Gastrocnemius medialis (tissue), 4 donors: ENCODE measurements at regions of chr21 and their contacts with region 1.

Region 1: DNA sequence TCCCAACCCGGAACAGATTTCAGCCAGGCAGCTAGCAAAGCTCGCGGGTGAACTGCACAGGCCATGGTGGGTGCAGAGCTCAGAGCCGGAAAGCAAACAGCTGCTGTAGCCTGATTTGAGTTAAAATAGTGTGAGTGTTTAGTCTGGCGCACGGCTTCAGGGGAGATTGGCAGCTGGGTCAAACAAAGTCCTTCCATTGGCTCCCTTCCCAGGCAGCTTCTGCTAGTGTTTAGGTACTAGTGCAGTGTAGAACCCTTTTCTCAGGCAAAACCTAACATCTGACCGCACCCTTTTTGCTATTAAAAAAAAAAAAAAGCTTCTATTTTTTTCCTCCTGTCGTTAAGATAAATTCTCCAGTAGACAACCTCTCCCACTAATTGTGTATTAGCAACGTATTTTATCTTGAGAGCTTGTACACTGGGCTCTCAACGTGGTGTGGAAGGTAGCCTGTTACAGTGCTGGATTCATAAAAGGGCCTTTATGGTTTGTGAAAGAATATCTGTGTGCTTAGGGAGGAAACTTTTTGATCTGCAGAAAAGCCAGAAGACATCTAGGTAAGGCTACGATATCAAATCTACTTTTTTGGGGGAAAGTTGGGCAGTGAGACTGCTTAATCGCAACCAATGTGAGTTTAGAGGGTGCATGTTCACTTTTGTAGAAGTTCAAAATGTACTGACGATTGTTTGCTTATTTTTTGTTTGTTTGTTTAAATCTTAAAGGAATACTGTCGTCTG is 689.6 kb downstream of the USP25 start:
- DNase-seq: peak; percentile 52 to 59
- ATAC-seq: peak; percentile 64 to 66
- H3K4me3 ChIP-seq: peak overlapping the region; percentile 51 to 60 (median 56)
- H3K27ac ChIP-seq: peak overlapping the region; percentile 86 to 91 (median 90)
- H3K4me1 ChIP-seq: peaks cover 4 to 15% of the 10 kb centered on the region in 2 donors
- H3K27me3 ChIP-seq: no peaks in the 10 kb centered on the region
- CTCF ChIP-seq: no peak
- POLR2A ChIP-seq: no peak

Region 2: DNA sequence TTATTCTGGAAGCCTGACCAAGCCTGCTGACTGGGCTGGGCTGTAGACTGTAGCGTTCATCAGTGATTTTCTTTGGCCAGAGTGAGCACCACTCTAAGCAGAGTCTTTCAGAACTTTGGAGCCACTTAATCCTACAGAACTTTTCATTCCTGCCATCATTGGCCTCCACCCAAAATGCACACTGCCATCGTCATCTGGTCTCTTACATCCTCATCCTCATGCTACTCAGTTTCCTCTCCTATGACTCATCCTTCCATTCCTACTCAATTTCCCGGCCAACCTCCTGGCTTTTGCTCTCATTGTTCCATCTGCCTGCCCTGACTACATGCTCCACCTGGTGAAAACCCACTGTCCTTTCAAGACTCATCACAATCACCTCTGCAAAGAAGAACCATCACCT is 923.4 kb before region 1 on chr21:
- in situ Hi-C with region 1: no loop called
- intact Hi-C with region 1: no loop called
- DNase-seq: no peak
- ATAC-seq: no peak
- H3K4me3 ChIP-seq: no peak overlapping the region
- H3K27ac ChIP-seq: no peak overlapping the region
- H3K4me1 ChIP-seq: no peaks in the 10 kb centered on the region
- H3K27me3 ChIP-seq: no peaks in the 10 kb centered on the region
- CTCF ChIP-seq: no peak
- POLR2A ChIP-seq: no peak

Region 3: GRCh38 chr21:15729674-15730483 is 689.5 kb before region 1 on chr21 and contains the start of gene USP25:
- in situ Hi-C with region 1: no loop called
- intact Hi-C with region 1: loop called (anchors 5 kb)
- DNase-seq: peak; percentile 91 to 93
- ATAC-seq: peak; percentile 86
- H3K4me3 ChIP-seq: peak within 1 kb of the TSS; percentile 60 to 83 (median 78)
- H3K27ac ChIP-seq: peak within 1 kb of the TSS; percentile 92 to 95 (median 94)
- H3K4me1 ChIP-seq: peaks cover 13 to 22% of the 10 kb centered on the region in 2 donors
- H3K27me3 ChIP-seq: no peaks in the 10 kb centered on the region
- CTCF ChIP-seq: peak in 3 of 5 experiments; percentile 16 to 42 (median 28)
- POLR2A ChIP-seq: peak; percentile 87 to 95
- total RNA-seq, gene USP25: 99.4 to 130 (median 107) TPM

Region 4: DNA sequence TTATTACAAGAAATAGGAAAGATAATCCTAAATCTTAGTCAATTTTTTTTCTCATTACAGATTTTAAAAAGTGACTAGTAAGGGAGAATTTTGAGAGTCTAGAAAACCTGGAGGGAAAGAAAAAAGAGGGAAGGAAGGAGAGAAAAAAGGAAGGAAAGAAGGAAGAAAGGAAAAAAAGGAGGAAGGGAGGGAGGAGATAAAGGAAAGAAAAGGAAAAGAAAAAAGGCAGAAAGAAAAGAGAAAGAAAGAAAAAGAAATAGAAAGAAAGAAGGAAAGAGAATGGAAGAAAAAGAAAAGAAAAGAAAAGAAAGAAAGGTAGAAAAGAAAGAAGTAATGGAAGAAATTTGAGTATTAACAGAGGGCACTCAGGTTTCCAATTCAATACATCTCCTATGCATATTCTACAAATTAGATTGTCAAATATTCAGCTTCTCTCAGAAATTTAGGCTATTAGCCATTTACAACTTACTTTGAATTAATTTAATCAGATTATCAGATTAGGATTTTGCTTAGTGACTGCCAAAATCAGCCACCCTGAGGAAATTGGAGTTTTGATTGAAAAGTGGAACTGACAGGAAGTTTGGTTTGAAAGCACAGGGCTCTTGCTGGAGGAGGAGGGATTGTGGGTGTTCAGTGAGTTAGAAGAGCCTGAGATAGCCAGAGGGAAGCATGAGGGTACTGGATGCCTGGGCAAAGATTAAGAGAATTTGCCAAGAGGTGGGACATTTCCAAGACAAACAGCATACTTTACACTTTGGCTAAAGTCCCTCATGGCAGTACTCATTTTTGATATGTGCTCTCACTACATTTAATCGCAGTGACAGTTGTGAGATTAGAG is 11.7 kb before region 1 on chr21:
- in situ Hi-C with region 1: no loop called
- intact Hi-C with region 1: no loop called
- DNase-seq: no peak
- ATAC-seq: no peak
- H3K4me3 ChIP-seq: no peak overlapping the region
- H3K27ac ChIP-seq: no peak overlapping the region
- H3K4me1 ChIP-seq: no peaks in the 10 kb centered on the region
- H3K27me3 ChIP-seq: no peaks in the 10 kb centered on the region
- CTCF ChIP-seq: no peak
- POLR2A ChIP-seq: no peak

Region 5: GRCh38 chr21:16588433-16588860 is 169.1 kb after region 1 on chr21:
- in situ Hi-C with region 1: loop called in 1 of 4 experiments (anchors 10 kb)
- intact Hi-C with region 1: loop called (anchors 5 kb)
- DNase-seq: peak; percentile 63 to 73
- ATAC-seq: peak; percentile 71 to 72
- H3K4me3 ChIP-seq: peak overlapping the region; percentile 47 to 55 (median 50)
- H3K27ac ChIP-seq: peak overlapping the region; percentile 74 to 80 (median 80)
- H3K4me1 ChIP-seq: peaks cover 13 to 18% of the 10 kb centered on the region in 2 donors
- H3K27me3 ChIP-seq: no peaks in the 10 kb centered on the region
- CTCF ChIP-seq: no peak
- POLR2A ChIP-seq: peak; percentile 44 to 50

Region 6: DNA sequence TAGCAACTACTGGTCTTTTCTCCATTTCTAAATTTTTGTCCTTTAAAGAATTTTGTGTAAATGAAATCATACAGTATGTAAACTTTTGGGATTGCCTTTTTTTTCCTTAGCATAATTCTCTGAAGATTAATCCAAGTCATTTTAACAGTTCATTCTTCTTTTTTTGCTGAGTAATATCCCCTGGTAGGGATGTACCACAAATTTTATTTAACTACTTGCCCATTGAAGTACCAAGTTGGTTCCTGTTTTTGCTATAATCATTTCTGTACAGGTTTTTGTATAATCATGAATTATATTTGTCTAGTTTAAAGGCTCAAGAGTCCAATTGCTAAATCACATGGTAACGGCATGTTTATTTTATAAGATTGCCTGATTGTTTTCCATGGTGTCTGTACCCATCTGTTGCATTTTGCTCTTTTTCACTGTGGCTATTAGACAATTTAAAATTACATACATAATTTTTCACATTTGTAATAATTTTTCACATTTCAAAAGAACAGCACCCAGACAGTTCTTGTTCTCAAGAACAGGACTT is 201.5 kb after region 1 on chr21:
- in situ Hi-C with region 1: no loop called
- intact Hi-C with region 1: no loop called
- DNase-seq: no peak
- ATAC-seq: no peak
- H3K4me3 ChIP-seq: no peak overlapping the region
- H3K27ac ChIP-seq: no peak overlapping the region
- H3K4me1 ChIP-seq: peaks cover 18% of the 10 kb centered on the region in 2 donors
- H3K27me3 ChIP-seq: no peaks in the 10 kb centered on the region
- CTCF ChIP-seq: no peak
- POLR2A ChIP-seq: no peak